ENCODE measurements at regions of chr18 and their contacts with region 1.

Region 1: GRCh38 chr18:413233-413632 is 87.3 kb downstream of the COLEC12 start:
- DNase-seq: no peak
- H3K4me3 ChIP-seq: no peak overlapping the region
- H3K27ac ChIP-seq: no peak overlapping the region
- H3K4me1 ChIP-seq: no peaks in the 10 kb centered on the region
- H3K27me3 ChIP-seq: no peaks in the 10 kb centered on the region
- CTCF ChIP-seq: no peak
- POLR2A ChIP-seq: no peak

Region 2: GRCh38 chr18:446941-447560 is 33.8 kb after region 1 on chr18:
- intact Hi-C with region 1: loop called (anchors 2 kb)
- DNase-seq: no peak
- H3K4me3 ChIP-seq: no peak overlapping the region
- H3K27ac ChIP-seq: no peak overlapping the region
- H3K4me1 ChIP-seq: no peaks in the 10 kb centered on the region
- H3K27me3 ChIP-seq: no peaks in the 10 kb centered on the region
- CTCF ChIP-seq: no peak
- POLR2A ChIP-seq: no peak

Region 3: DNA sequence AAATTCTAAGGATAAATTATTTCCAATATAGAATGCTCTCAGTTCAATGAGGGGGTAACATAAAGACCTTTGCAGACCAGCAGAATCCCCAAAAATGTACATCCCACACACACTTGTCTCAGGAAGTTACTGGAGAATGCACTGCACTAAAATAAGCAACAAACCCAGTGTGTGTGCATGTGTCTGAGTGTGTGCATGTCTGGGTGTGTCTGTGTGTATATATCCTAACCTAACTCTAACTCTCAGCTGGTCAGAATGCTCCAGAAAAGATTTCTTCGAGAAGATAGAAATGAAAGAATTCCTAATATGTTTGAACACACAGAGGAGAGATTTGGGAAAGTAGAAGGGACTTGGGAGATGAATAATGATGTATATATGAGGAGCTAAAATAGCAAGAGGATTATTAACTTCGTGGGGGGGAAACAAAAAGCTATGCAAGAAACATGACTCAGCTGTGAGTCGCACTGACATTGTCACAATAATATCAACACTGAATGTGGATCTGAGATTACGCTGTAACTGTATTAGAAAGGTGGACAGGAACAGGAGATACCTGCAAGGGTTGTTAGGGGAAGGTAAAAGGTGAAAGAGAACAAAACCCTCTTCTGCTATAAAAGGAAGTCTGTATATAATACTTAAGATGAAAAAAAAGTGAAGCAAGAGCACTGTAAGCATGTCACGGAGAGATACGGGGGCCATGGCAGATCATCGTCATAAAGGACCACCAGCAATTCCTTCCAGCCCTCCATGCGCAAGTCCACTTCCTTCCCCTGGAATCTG is 76.2 kb after region 1 on chr18:
- intact Hi-C with region 1: no loop called
- DNase-seq: no peak
- H3K4me3 ChIP-seq: no peak overlapping the region
- H3K27ac ChIP-seq: no peak overlapping the region
- H3K4me1 ChIP-seq: no peaks in the 10 kb centered on the region
- H3K27me3 ChIP-seq: no peaks in the 10 kb centered on the region
- CTCF ChIP-seq: no peak
- POLR2A ChIP-seq: no peak

Region 4: GRCh38 chr18:681985-682384 is 268.8 kb after region 1 on chr18:
- intact Hi-C with region 1: no loop called
- DNase-seq: no peak
- H3K4me3 ChIP-seq: no peak overlapping the region
- H3K27ac ChIP-seq: no peak overlapping the region
- H3K4me1 ChIP-seq: no peaks in the 10 kb centered on the region
- H3K27me3 ChIP-seq: no peaks in the 10 kb centered on the region
- CTCF ChIP-seq: no peak
- POLR2A ChIP-seq: no peak

Region 5: GRCh38 chr18:1513519-1513918 is 1100.3 kb after region 1 on chr18:
- intact Hi-C with region 1: no loop called
- DNase-seq: no peak
- H3K4me3 ChIP-seq: no peak overlapping the region
- H3K27ac ChIP-seq: no peak overlapping the region
- H3K4me1 ChIP-seq: no peaks in the 10 kb centered on the region
- H3K27me3 ChIP-seq: no peaks in the 10 kb centered on the region
- CTCF ChIP-seq: no peak
- POLR2A ChIP-seq: no peak

Measured in breast epithelium (tissue), 4 donors.